Stomach (tissue), 19 donors: ENCODE measurements at regions of chr17 and their contacts with region 1.

Region 1: DNA sequence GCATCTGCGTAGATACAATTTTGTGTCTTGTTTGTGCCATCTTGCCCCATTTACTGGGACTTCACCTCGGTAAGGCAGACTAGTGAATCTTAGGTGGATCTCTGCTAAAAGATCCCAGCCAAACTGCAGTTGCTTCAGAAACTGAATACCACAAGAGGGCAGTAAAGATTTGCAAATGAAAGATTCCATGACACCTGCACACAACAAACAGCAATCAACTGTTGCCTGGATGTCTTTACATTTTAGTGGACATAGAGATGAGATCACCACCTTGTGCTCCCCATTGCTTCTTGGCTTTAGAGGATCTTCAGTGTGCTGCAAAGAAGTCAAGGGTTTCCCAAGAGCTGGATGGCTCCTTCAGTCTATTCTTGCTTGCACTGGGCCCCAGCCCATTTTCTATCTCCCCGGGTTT is 119.2 kb upstream of the CACNG5 start:
- DNase-seq: peak in 1 of 2 donors; percentile 88
- H3K4me3 ChIP-seq: no peak overlapping the region
- H3K27ac ChIP-seq: no peak overlapping the region
- H3K4me1 ChIP-seq: peaks cover 0 to 42% (median 20%) of the 10 kb centered on the region in 4 donors
- H3K27me3 ChIP-seq: no peaks in the 10 kb centered on the region
- CTCF ChIP-seq: peak in 5 of 7 experiments; percentile 50 to 81 (median 62)
- EP300 ChIP-seq: no peak
- POLR2A ChIP-seq: no peak

Region 2: DNA sequence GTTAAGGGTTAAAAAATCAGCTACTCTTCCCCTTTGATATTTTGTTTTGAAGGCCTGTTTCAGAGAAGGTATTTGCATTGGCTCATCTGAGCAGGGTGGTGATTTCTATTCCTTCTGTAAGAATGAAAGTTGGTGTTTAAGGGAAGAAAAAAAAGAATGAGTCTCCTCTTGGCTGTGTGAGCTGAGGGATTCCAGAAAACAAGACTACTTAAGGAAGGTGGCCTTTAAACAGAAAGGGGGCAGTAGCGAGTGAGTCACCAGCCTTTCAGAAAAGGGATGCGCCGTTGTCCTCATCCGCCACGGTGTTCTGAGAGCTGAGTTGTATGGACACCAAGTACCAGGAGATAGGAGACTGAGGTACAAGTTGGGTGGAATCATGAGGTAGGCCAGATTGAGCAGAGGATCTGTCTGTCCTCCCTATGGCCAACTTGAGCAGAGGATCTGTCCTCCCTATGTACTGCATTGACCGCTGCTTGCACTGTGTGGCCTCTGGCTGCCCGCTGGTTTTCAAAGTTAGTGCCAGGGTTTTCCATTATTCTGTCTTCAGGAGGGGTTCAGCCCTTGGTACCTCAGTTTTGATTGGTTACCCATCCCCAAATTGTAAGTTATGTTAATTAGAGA is 405.1 kb before region 1 on chr17:
- intact Hi-C with region 1: no loop called
- DNase-seq: no peak
- H3K4me3 ChIP-seq: no peak overlapping the region
- H3K27ac ChIP-seq: no peak overlapping the region
- H3K4me1 ChIP-seq: peaks cover 4 to 56% (median 34%) of the 10 kb centered on the region in 4 donors
- H3K27me3 ChIP-seq: no peaks in the 10 kb centered on the region
- CTCF ChIP-seq: no peak
- EP300 ChIP-seq: no peak
- POLR2A ChIP-seq: no peak

Region 3: GRCh38 chr17:66643815-66644702 is 71.7 kb before region 1 on chr17:
- intact Hi-C with region 1: no loop called
- DNase-seq: no peak
- H3K4me3 ChIP-seq: no peak overlapping the region
- H3K27ac ChIP-seq: no peak overlapping the region
- H3K4me1 ChIP-seq: peaks cover 0 to 22% (median 7%) of the 10 kb centered on the region in 4 donors
- H3K27me3 ChIP-seq: no peaks in the 10 kb centered on the region
- CTCF ChIP-seq: no peak
- EP300 ChIP-seq: no peak
- POLR2A ChIP-seq: no peak

Region 4: GRCh38 chr17:66900126-66901010 is 184.6 kb after region 1 on chr17:
- intact Hi-C with region 1: loop called (anchors 5 kb)
- DNase-seq: peak in 1 of 2 donors; percentile 36
- H3K4me3 ChIP-seq: no peak overlapping the region
- H3K27ac ChIP-seq: no peak overlapping the region
- H3K4me1 ChIP-seq: peaks cover 8 to 15% (median 11%) of the 10 kb centered on the region in 4 donors
- H3K27me3 ChIP-seq: no peaks in the 10 kb centered on the region
- CTCF ChIP-seq: peak in 1 of 7 experiments; percentile 13
- EP300 ChIP-seq: no peak
- POLR2A ChIP-seq: no peak